Mammary epithelial cell (primary cell): ENCODE measurements at regions of chr19 and their contacts with region 1.

Region 1: GRCh38 chr19:37779127-37780005 is at the start of gene ZNF573:
- DNase-seq: peak; percentile 89
- H3K4me3 ChIP-seq: peak within 1 kb of the TSS; percentile 60 to 79 (median 63)
- H3K27ac ChIP-seq: peak within 1 kb of the TSS; percentile 34
- H3K4me1 ChIP-seq: peaks cover 5% of the 10 kb centered on the region
- H3K27me3 ChIP-seq: no peaks in the 10 kb centered on the region
- CTCF ChIP-seq: peak in 1 of 2 donors; percentile 12
- total RNA-seq, gene ZNF573: 5.5 to 8.7 TPM

Region 2: GRCh38 chr19:37572203-37572602 is 207.2 kb before region 1 on chr19:
- CTCF ChIA-PET with region 1: no interaction called
- dilution Hi-C with region 1: no loop called
- in situ Hi-C with region 1: no loop called
- intact Hi-C with region 1: no loop called
- DNase-seq: peak; percentile 63
- H3K4me3 ChIP-seq: no peak overlapping the region
- H3K27ac ChIP-seq: no peak overlapping the region
- H3K4me1 ChIP-seq: no peaks in the 10 kb centered on the region
- H3K27me3 ChIP-seq: no peaks in the 10 kb centered on the region
- CTCF ChIP-seq: no peak

Region 3: DNA sequence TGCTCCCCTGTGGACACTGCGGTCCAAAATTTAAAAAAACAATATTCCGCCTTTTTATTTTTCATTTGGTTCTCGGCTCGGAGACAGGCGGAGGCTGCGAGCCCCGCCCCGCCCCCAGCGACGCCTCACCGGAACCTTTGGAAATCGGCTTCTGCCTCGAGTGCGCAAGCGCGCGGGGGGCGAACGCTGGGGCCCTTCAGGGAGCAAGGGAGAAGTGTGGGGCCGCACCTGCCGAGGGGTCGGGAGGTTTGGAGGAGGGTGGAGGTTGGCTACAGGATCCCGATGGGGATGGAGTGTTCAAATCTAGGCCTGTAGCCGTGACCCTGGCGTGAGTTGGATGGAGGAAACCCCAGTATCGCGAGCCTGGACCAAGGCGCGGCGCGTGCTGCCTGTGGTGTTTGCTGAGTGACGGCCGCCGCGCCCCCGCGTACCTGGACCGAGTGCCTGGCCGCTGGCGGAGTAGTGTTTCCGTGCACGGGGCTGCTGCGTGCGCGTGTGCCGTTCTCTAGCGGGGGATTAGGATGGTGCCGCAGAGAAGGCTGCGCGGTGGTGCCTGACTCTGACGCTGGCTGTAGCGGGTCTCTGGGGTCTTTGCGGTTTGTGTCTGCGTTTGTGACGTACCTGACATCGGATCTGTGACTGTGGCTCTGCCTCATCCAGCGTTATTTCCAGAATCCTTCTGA is 123.5 kb before region 1 on chr19:
- CTCF ChIA-PET with region 1: no interaction called
- dilution Hi-C with region 1: no loop called
- in situ Hi-C with region 1: no loop called
- intact Hi-C with region 1: loop called (anchors 2 kb)
- DNase-seq: peak; percentile 86
- H3K4me3 ChIP-seq: peak overlapping the region; percentile 74 to 87 (median 79)
- H3K27ac ChIP-seq: peak overlapping the region; percentile 67
- H3K4me1 ChIP-seq: peaks cover 2% of the 10 kb centered on the region
- H3K27me3 ChIP-seq: no peaks in the 10 kb centered on the region
- CTCF ChIP-seq: no peak

Region 4: GRCh38 chr19:37719111-37719926 is 60.0 kb before region 1 on chr19 and contains the start of gene ZNF607:
- CTCF ChIA-PET with region 1: no interaction called
- dilution Hi-C with region 1: no loop called
- in situ Hi-C with region 1: no loop called
- intact Hi-C with region 1: loop called (anchors 1 kb)
- DNase-seq: peak; percentile 91
- H3K4me3 ChIP-seq: peak within 1 kb of the TSS; percentile 76 to 97 (median 88)
- H3K27ac ChIP-seq: peak within 1 kb of the TSS; percentile 52
- H3K4me1 ChIP-seq: no peaks in the 10 kb centered on the region
- H3K27me3 ChIP-seq: no peaks in the 10 kb centered on the region
- CTCF ChIP-seq: peak; percentile 48 to 71
- total RNA-seq, gene ZNF607: 8.3 to 9.0 TPM